ENCODE measurements at regions of chr17 and their contacts with region 1.

Region 1: DNA sequence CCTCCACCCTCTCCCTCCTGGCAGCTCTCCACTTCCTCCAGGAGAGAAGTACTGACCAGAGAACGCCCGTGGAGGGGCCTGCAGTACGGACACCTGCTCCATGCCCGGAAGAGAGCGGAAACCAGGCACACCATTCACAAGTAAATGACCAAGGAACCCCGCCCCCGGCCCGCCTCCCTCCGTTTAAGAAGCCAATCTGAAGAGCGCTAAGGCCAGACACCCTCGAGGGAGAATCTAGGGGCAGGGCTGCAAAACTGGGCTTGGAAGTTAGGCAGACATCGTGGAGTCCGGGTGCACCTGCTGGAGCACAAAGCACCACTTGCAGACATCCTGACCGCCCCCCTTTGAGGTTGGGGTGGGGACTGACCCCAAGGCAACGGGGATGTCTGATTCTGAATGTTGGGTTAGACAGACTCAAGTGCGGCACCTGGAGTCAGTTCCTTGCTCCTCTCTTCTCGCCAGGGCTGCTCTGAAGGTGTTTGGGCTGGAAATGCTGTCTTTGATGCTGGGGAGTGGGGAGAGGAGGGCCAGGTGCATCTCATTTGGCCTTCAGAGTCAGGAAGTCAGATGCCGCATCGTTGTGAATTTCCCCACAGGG is 964 bp upstream of the FAAP100 start:
- DNase-seq: peak; percentile 57 to 91 (median 76)
- ATAC-seq: peak; percentile 80
- H3K4me3 ChIP-seq: peak overlapping the region; percentile 97
- H3K27ac ChIP-seq: peak overlapping the region; percentile 90
- H3K4me1 ChIP-seq: peaks cover 28 to 72% of the 10 kb centered on the region in 2 experiments
- H3K27me3 ChIP-seq: no peaks in the 10 kb centered on the region
- CTCF ChIP-seq: peak; percentile 20 to 47 (median 34); a peak in 3 of 6 replicates
- EP300 ChIP-seq: no peak
- POLR2A ChIP-seq: peak; percentile 64; the same call in 1 of the 2 replicates
- RAD21 ChIP-seq: peak in 1 of 2 experiments; percentile 24; a peak in 1 of 4 replicates

Region 2: DNA sequence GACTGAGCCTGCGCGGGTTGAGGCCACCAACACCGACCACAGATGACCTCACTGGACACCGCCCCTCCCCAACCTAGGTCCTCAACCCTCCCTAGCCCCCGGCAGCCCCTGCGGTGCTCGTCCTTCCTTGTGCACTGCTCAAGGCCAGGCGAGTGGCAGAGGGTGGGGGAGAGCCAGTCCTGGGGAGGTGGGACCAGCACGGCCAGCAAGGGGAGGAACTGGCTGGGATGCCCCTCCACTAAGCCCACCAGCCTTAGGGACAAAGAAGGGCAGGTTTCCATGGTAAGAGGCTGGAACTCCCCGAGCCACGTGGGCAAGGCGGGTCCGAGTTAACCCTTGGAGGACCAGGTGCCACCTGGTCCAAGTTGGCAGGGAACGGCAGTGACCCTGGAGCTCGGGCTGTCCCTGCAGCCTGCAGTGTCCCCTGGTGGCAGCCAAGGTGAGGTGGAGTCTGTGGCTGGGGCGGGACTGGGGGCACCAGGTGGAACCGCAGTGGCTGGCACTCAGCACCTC is 15.7 kb before region 1 on chr17:
- CTCF ChIA-PET with region 1: no interaction called
- POLR2A ChIA-PET with region 1: interaction called, 26 read pairs
- in situ Hi-C with region 1: no loop called
- intact Hi-C with region 1: no loop called
- DNase-seq: peak in 2 of 4 experiments; percentile 54 to 59
- ATAC-seq: peak; percentile 67
- H3K4me3 ChIP-seq: no peak overlapping the region
- H3K27ac ChIP-seq: no peak overlapping the region
- H3K4me1 ChIP-seq: peaks cover 0 to 63% of the 10 kb centered on the region in 2 experiments; a peak in 2 of 5 replicates
- H3K27me3 ChIP-seq: no peaks in the 10 kb centered on the region
- CTCF ChIP-seq: peak; percentile 55 to 60 (median 58)
- EP300 ChIP-seq: no peak
- POLR2A ChIP-seq: peak; percentile 44; the same call in 1 of the 2 replicates
- RAD21 ChIP-seq: peak in 1 of 2 experiments; percentile 40; a peak in 1 of 4 replicates

Measured in K562 (cell line).